MCF 10A (cell line): ENCODE measurements at regions of chr13 and their contacts with region 1.

Region 1: DNA sequence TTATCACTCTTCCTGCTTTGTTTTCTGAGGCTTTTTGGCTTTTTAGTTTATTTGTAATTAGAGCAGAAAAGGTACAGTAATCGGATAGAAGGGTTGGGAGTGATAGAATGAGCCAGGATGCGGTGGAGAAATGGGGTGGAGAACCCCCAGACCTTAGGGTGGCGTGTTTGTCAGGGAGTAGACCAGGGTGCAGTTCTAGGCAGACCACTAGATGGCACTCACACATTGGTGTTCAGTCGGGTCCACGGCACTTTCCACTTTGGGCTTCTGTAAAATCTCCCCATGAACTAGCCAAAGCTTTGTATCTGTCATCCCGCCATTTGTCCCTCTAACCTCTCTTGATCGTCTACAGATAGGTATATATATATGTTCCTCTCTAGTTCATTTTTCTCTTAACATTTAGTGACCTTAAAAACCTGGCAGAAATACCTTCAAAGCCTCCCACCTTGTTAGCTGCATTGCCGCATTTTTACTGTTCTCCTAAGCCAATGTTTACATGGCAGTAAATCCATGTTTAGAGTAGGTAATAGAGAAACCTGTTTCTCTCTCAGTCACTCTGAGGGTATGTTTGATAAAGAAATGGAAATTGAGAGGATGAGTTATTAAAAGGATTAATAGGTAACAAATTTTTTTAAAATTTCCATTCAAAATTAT is 154.9 kb downstream of the TM9SF2 start:
- DNase-seq: peak; percentile 78
- H3K4me3 Mint-ChIP-seq: peak overlapping the region; percentile 53
- H3K27ac Mint-ChIP-seq: peak overlapping the region; percentile 90
- H3K4me1 Mint-ChIP-seq: peaks cover 14% of the 10 kb centered on the region
- H3K27me3 Mint-ChIP-seq: no peaks in the 10 kb centered on the region
- CTCF ChIP-seq: peak; percentile 91

Region 2: GRCh38 chr13:99442273-99442895 is 213.8 kb before region 1 on chr13:
- CTCF ChIA-PET with region 1: interaction called, 5 read pairs
- POLR2A ChIA-PET with region 1: no interaction called
- intact Hi-C with region 1: loop called (anchors 5 kb)
- DNase-seq: peak; percentile 61
- H3K4me3 Mint-ChIP-seq: no peak overlapping the region
- H3K27ac Mint-ChIP-seq: no peak overlapping the region
- H3K4me1 Mint-ChIP-seq: no peaks in the 10 kb centered on the region
- H3K27me3 Mint-ChIP-seq: peaks cover 19% of the 10 kb centered on the region
- CTCF ChIP-seq: peak; percentile 92

Region 3: GRCh38 chr13:99666146-99666805 is 10.1 kb after region 1 on chr13:
- CTCF ChIA-PET with region 1: interaction called, 31 read pairs
- POLR2A ChIA-PET with region 1: no interaction called
- intact Hi-C with region 1: no loop called
- DNase-seq: no peak
- H3K4me3 Mint-ChIP-seq: no peak overlapping the region
- H3K27ac Mint-ChIP-seq: no peak overlapping the region
- H3K4me1 Mint-ChIP-seq: peaks cover 5% of the 10 kb centered on the region
- H3K27me3 Mint-ChIP-seq: no peaks in the 10 kb centered on the region
- CTCF ChIP-seq: no peak

Region 4: GRCh38 chr13:99980201-99980823 is 324.1 kb after region 1 on chr13:
- CTCF ChIA-PET with region 1: no interaction called
- POLR2A ChIA-PET with region 1: no interaction called
- intact Hi-C with region 1: loop called (anchors 2 kb)
- DNase-seq: peak; percentile 81
- H3K4me3 Mint-ChIP-seq: peak overlapping the region; percentile 73
- H3K27ac Mint-ChIP-seq: no peak overlapping the region
- H3K4me1 Mint-ChIP-seq: peaks cover 4% of the 10 kb centered on the region
- H3K27me3 Mint-ChIP-seq: no peaks in the 10 kb centered on the region
- CTCF ChIP-seq: no peak

Region 5: GRCh38 chr13:100392709-100393641 is 736.8 kb after region 1 on chr13:
- CTCF ChIA-PET with region 1: no interaction called
- POLR2A ChIA-PET with region 1: no interaction called
- intact Hi-C with region 1: no loop called
- DNase-seq: peak; percentile 99
- H3K4me3 Mint-ChIP-seq: peak overlapping the region; percentile 57
- H3K27ac Mint-ChIP-seq: no peak overlapping the region
- H3K4me1 Mint-ChIP-seq: peaks cover 17% of the 10 kb centered on the region
- H3K27me3 Mint-ChIP-seq: no peaks in the 10 kb centered on the region
- CTCF ChIP-seq: no peak

Region 6: DNA sequence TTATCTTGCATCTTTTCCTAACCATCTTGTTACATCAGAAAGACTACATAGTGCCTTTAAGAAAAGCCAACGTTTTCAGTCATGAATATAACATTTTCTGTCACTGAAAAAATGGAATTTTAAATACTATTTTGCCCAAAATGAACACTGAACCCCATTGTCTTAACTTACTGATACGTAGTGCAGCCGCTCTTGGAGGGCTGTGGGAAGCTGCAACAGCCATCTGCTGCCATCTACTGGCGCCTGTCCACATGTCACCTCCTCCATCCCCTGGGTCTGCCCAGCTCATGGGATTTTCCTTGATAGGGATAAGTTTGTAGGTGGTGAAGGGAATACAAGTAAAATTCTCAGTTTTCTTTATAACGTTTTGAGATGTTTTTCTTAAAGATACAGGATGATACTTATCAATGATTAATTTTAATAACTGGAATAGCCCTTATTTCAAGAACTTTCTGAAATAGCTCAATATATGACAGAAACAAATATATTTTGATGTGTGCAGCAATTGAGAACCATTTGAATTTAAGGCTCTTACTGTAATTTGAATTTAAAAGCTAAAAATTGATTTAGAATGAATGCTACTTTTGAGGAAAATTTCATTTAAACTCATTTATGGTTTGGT is 858.7 kb after region 1 on chr13:
- CTCF ChIA-PET with region 1: interaction called, 16 read pairs
- POLR2A ChIA-PET with region 1: interaction called, 4 read pairs
- intact Hi-C with region 1: loop called (anchors 1 kb)
- DNase-seq: peak; percentile 74
- H3K4me3 Mint-ChIP-seq: no peak overlapping the region
- H3K27ac Mint-ChIP-seq: no peak overlapping the region
- H3K4me1 Mint-ChIP-seq: peaks cover 12% of the 10 kb centered on the region
- H3K27me3 Mint-ChIP-seq: no peaks in the 10 kb centered on the region
- CTCF ChIP-seq: peak; percentile 95

Region 7: GRCh38 chr13:100674848-100675660 is 1018.8 kb after region 1 on chr13:
- CTCF ChIA-PET with region 1: interaction called, 3 read pairs
- POLR2A ChIA-PET with region 1: no interaction called
- intact Hi-C with region 1: loop called (anchors 10 kb)
- DNase-seq: peak; percentile 97
- H3K4me3 Mint-ChIP-seq: peak overlapping the region; percentile 85
- H3K27ac Mint-ChIP-seq: peak overlapping the region; percentile 28
- H3K4me1 Mint-ChIP-seq: peaks cover 19% of the 10 kb centered on the region
- H3K27me3 Mint-ChIP-seq: no peaks in the 10 kb centered on the region
- CTCF ChIP-seq: no peak

Region 8: GRCh38 chr13:101127741-101128353 is 1471.6 kb after region 1 on chr13:
- CTCF ChIA-PET with region 1: interaction called, 3 read pairs
- POLR2A ChIA-PET with region 1: interaction called, 3 read pairs
- intact Hi-C with region 1: loop called (anchors 5 kb)
- DNase-seq: peak; percentile 73
- H3K4me3 Mint-ChIP-seq: no peak overlapping the region
- H3K27ac Mint-ChIP-seq: no peak overlapping the region
- H3K4me1 Mint-ChIP-seq: no peaks in the 10 kb centered on the region
- H3K27me3 Mint-ChIP-seq: peaks cover 20% of the 10 kb centered on the region
- CTCF ChIP-seq: peak; percentile 85